Psoas muscle (tissue), 8 donors: ENCODE measurements at regions of chr12 and their contacts with region 1.

Region 1: GRCh38 chr12:106955377-106956047 is at the start of gene TMEM263:
- DNase-seq: peak; percentile 94 to 97
- ATAC-seq: peak; percentile 92 to 96 (median 94)
- H3K4me3 ChIP-seq: peak within 1 kb of the TSS; percentile 93
- H3K27ac ChIP-seq: peak within 1 kb of the TSS; percentile 96
- H3K4me1 ChIP-seq: peaks cover 37% of the 10 kb centered on the region
- H3K27me3 ChIP-seq: no peaks in the 10 kb centered on the region
- CTCF ChIP-seq: no peak
- total RNA-seq, gene TMEM263: 13.4 to 18.2 (median 16.4) TPM

Region 2: GRCh38 chr12:106974511-106974910 is 19.0 kb after region 1 on chr12:
- intact Hi-C with region 1: no loop called
- DNase-seq: no peak
- ATAC-seq: no peak
- H3K4me3 ChIP-seq: no peak overlapping the region
- H3K27ac ChIP-seq: no peak overlapping the region
- H3K4me1 ChIP-seq: peaks cover 28% of the 10 kb centered on the region
- H3K27me3 ChIP-seq: no peaks in the 10 kb centered on the region
- CTCF ChIP-seq: no peak

Region 3: DNA sequence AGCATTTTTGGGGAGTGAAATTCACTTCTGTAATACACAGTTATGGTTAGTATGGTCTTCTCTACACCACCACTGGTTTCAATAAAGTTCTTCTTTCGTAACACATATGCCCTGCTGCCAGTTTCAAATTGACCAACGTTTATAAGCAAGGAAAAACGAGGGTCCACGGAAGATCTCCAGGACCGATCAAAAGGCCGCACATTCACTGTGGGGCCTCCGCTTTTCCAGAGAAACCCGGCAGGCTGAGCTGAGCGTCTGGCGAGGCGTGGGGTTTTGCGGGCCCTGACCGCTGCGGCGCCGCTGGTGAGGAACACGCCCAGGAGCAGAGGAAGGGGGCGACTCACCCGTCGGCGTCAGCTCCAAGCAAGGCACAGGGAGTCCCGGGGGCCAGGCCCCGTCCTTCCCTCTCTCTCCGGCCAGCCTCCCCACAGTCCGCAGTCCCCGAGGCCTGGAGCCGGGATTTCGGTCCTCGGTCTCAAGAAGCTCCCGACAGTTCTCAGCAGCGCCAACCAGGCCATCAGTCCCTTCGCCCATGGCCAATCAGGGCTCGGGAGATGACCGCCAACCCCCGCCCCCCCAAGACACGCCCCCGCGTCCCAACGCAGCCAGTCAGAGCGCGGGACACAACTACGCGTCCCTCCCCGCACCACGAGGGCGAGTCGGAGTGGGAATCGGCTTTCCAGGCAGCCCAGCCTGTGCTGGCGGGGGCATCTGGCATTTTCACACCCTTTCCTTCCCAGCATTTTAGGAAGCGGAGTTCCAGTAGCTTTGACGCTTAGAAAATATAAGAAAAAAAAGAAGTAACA is 31.3 kb after region 1 on chr12 and contains the start of gene MTERF2:
- intact Hi-C with region 1: loop called in 1 of 2 experiments (anchors 1 kb)
- DNase-seq: peak; percentile 95 to 96
- ATAC-seq: peak; percentile 97 to 98 (median 98)
- H3K4me3 ChIP-seq: peak within 1 kb of the TSS; percentile 92
- H3K27ac ChIP-seq: peak within 1 kb of the TSS; percentile 95
- H3K4me1 ChIP-seq: peaks cover 22% of the 10 kb centered on the region
- H3K27me3 ChIP-seq: no peaks in the 10 kb centered on the region
- CTCF ChIP-seq: no peak
- total RNA-seq, gene MTERF2: 12.4 to 14.9 (median 13.0) TPM